ENCODE measurements at regions of chr11 and their contacts with region 1.

Region 1: GRCh38 chr11:93234602-93235207 is 36.9 kb upstream of the SLC36A4 start:
- DNase-seq: peak; percentile 44
- H3K4me3 ChIP-seq: no peak overlapping the region
- CTCF ChIP-seq: peak; percentile 91

Region 2: GRCh38 chr11:93248602-93249001 is 13.9 kb after region 1 on chr11:
- CTCF ChIA-PET with region 1: interaction called, 11 read pairs
- POLR2A ChIA-PET with region 1: no interaction called
- DNase-seq: no peak
- H3K4me3 ChIP-seq: no peak overlapping the region
- CTCF ChIP-seq: no peak

Region 3: GRCh38 chr11:93279851-93280347 is 45.2 kb after region 1 on chr11:
- CTCF ChIA-PET with region 1: no interaction called
- POLR2A ChIA-PET with region 1: no interaction called
- DNase-seq: no peak
- H3K4me3 ChIP-seq: no peak overlapping the region
- CTCF ChIP-seq: no peak

Region 4: DNA sequence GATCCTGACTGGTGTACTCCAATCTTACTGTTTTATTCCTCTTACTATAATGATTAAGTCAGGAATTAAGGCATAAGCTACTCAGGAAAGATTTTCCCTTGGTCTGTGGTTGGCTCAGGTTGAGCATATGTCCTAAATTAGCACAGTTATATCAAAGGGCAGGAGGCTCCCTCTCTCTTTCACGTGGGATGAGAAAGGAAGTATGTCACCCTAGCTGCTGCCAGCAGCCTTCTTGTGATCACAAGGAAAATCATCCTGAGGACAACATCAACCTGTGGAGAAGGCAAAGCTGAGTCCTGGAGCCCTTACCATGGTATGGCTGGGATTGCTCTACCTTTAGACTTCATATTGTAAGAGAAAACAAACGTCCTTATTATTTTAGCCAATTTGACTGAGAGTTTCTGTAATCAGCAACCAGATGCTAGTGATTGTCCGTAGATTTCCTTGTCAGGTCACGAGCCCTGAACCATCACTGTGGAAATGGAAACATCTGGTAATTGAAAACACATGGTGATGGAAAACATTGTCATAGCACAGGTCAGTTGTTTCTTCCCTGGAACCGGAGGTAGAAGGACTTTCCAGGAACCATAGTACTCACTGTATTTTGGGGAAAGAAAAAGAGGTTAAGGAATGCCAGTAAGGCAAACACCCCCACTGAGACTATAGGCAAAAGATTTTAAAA is 55.2 kb after region 1 on chr11:
- CTCF ChIA-PET with region 1: no interaction called
- POLR2A ChIA-PET with region 1: no interaction called
- DNase-seq: no peak
- H3K4me3 ChIP-seq: no peak overlapping the region
- CTCF ChIP-seq: no peak

Region 5: DNA sequence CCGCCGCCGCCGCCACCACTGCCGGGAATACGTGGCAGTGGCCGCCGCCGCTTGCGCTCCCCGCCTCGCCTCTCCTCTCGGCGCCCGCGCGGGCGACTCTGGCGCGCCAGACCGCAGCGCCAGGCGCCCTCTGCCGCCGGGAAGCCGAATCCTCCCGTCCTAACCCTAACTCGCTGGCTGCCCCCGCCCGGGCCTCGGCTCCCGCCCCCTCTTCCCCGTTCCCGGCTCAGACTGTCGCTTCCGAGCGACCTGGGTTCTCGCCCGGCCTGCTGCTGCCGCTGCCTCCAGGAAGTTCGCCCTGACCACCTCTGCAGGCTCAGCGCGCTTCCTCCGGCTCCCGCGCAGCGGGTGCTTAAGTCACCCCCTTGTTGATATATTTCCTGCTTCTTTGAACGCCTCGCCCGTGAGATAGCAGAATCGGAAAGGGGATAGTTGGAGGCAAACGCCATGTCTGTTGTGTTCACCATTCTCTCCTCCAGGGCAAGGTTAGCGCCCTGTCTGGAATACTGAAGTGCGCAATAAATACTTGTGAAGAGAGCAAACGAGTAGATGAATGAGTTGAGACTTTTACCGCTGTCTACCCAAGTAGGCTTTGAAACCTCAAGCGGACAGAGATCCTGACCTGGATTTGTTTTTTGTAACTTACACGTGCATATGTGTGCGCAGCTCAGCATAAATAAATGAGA is 308.7 kb after region 1 on chr11 and contains the start of gene SMCO4:
- CTCF ChIA-PET with region 1: interaction called, 14 read pairs
- POLR2A ChIA-PET with region 1: no interaction called
- DNase-seq: no peak
- H3K4me3 ChIP-seq: peak within 1 kb of the TSS; percentile 65
- CTCF ChIP-seq: peak; percentile 83

Region 6: GRCh38 chr11:93652161-93652597 is 417.5 kb after region 1 on chr11:
- CTCF ChIA-PET with region 1: interaction called, 149 read pairs
- POLR2A ChIA-PET with region 1: interaction called, 3 read pairs
- DNase-seq: no peak
- H3K4me3 ChIP-seq: no peak overlapping the region
- CTCF ChIP-seq: peak; percentile 27

Region 7: DNA sequence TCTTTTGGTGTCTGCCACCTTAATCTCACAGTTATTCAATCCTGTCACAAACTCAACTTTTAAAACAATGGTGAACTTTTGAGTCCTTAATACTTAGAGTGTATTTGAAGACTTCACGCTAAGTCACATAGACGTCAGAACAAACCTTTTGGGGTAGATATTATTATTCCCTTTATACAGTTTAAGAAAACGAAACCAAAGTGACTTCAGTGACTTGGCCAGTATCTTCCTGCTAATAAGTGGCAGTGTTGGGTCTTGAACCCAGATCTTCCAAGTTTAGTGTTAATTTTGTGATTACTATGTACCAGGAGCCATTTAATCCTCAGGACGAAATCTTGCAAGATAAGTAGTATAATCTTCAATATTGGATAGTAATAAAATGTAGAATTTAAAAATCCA is 427.5 kb after region 1 on chr11:
- CTCF ChIA-PET with region 1: interaction called, 149 read pairs
- POLR2A ChIA-PET with region 1: no interaction called
- DNase-seq: no peak
- H3K4me3 ChIP-seq: peak overlapping the region; percentile 89
- CTCF ChIP-seq: no peak

Measured in AG04449 (cell line).